CD14-positive monocyte (primary cell): ENCODE measurements at regions of chr1 and their contacts with region 1.

Region 1: DNA sequence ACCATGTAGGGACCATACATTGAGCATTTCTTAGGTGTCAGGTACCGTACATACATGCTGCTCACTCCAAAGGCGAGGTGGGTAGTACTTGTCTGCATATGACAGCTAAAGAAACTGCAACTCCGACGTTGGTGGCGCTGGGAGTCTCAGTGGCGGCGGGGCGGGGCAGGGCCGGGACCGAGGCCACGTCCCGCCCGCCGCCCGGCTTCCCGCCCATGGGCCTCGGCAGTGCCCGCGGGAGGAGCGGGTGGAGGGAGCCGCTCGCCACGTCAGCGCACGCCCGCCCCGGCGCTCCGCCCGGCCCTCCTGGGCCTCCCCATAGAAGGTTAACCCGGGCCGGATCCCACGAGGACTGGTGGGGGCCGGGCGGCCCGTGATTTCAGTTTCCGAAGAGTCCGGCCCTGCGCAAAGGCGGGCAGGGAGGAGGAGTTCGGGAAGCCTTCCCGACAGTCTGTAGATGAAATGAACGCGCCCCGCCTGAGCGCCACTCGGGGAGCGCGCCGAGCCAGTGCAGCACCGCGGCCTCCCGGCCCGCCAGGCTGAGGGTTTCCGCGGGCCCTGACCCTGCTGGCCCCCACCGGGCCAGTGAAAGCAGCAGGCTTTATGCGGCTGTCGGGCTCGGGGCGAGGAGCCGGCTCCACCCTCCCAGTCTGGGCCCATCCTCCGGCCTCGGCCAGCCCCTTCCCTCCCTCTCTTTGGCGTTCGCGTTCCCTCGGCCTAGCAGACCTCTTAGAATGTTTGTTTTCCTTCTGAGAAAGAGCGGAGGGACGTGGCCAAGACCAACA is 119.9 kb upstream of the JUN start:
- DNase-seq: peak; percentile 74 to 82 (median 76)
- H3K4me3 ChIP-seq: peak overlapping the region; percentile 33 to 76 (median 48)
- H3K4me3 Mint-ChIP-seq: peak overlapping the region; percentile 80 to 88
- H3K27ac ChIP-seq: peak overlapping the region; percentile 91 to 92
- H3K27ac Mint-ChIP-seq: peak overlapping the region; percentile 92 to 97 (median 97)
- H3K4me1 ChIP-seq: peaks cover 34 to 49% of the 10 kb centered on the region in 2 donors
- H3K4me1 Mint-ChIP-seq: peaks cover 46% of the 10 kb centered on the region
- H3K27me3 ChIP-seq: no peaks in the 10 kb centered on the region
- H3K27me3 Mint-ChIP-seq: peaks cover 0 to 6% (median 4%) of the 10 kb centered on the region in 3 donors
- CTCF ChIP-seq: no peak

Region 2: DNA sequence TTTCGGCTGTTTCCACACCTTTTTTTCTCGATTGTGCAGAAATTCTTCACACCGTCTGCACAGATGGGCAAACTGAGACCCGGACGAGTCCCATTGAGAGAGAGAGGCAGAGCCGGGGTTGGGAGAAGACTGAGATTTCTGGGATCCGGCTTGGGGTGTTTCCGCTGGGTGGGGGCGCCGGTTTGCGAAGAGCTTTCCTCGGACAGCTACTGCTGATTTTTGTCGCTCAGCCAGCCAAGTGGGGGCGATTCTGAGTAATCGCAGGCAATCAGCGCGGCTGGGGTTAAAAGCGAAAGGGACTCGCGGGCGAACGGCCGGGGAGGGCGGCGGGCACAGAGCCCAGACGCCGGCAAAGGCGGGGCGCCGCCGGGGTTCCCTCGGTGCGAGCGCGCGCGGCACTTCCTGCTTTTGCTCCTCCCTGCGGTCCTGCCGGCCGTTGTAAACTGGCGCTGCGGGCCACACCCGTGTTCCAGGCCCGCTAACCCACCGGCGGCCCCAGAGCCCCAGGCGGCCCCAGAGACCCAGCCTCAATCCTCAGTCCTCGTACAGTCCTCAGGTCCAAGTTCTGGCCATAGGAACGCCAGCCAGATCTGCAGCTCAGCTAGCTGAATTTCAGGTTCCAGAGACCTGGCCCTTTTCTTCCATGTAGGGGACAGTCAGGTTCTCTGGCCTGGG is 87.5 kb before region 1 on chr1:
- intact Hi-C with region 1: loop called in 1 of 2 experiments (anchors 10 kb)
- DNase-seq: peak; percentile 84 to 88 (median 85)
- H3K4me3 ChIP-seq: peak overlapping the region; percentile 73 to 93 (median 84)
- H3K4me3 Mint-ChIP-seq: peak overlapping the region; percentile 89 to 95
- H3K27ac ChIP-seq: peak overlapping the region; percentile 87 to 93
- H3K27ac Mint-ChIP-seq: peak overlapping the region; percentile 89 to 98 (median 96)
- H3K4me1 ChIP-seq: peaks cover 44 to 59% of the 10 kb centered on the region in 2 donors
- H3K4me1 Mint-ChIP-seq: peaks cover 63% of the 10 kb centered on the region
- H3K27me3 ChIP-seq: no peaks in the 10 kb centered on the region
- H3K27me3 Mint-ChIP-seq: no peaks in the 10 kb centered on the region
- CTCF ChIP-seq: no peak

Region 3: DNA sequence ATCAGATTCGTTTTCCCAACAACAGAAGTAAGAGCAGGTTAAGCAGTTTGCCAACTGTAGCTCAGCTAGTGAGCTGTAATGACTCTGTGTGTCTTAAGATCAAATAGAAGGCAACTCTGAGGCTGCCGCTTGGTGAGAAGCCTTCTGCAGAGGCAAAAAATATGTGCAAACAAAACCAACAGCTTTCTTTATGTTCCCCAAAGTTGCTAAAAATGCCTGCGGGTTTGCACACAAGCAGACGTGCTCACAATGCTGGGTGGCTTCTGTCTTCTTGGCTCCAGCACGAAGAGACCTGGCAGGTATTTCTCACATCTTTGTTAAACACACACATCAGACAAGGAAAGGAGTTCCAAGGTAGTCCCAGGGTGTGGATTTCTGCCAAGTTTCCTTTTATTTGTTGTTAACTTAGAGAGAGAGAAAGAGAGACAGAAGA is 39.1 kb after region 1 on chr1:
- intact Hi-C with region 1: no loop called
- DNase-seq: no peak
- H3K4me3 ChIP-seq: no peak overlapping the region
- H3K4me3 Mint-ChIP-seq: no peak overlapping the region
- H3K27ac ChIP-seq: no peak overlapping the region
- H3K27ac Mint-ChIP-seq: no peak overlapping the region
- H3K4me1 ChIP-seq: peaks cover 17 to 27% of the 10 kb centered on the region in 2 donors
- H3K4me1 Mint-ChIP-seq: peaks cover 47% of the 10 kb centered on the region
- H3K27me3 ChIP-seq: no peaks in the 10 kb centered on the region
- H3K27me3 Mint-ChIP-seq: peaks cover 3 to 13% (median 9%) of the 10 kb centered on the region in 3 donors
- CTCF ChIP-seq: no peak

Region 4: DNA sequence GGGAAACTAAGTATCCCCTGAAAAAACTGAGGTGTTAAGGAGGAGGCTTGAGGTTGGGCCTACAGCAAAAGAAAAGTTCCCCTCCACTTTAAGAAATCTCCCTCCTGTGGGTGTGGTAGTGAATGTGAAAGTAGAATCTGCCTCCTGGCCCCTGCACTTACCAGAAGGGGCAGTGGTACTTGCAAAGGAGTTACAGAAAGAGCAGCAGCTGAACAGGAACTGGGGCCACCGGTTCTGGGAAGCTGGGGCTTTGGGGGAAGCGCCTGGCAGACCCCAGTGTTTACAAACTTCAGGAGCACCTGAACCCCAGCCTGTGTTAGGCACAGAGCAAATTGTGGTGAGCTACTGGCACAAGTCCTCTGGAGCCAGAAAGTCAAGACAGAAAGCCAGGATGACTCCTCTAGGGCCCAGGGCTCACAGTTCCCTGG is 143.0 kb after region 1 on chr1:
- intact Hi-C with region 1: no loop called
- DNase-seq: peak in 1 of 3 donors; percentile 10
- H3K4me3 ChIP-seq: no peak overlapping the region
- H3K4me3 Mint-ChIP-seq: no peak overlapping the region
- H3K27ac ChIP-seq: peak overlapping the region in 1 of 2 donors; percentile 7
- H3K27ac Mint-ChIP-seq: peak overlapping the region in 3 of 7 donors; percentile 38 to 58 (median 50)
- H3K4me1 ChIP-seq: peaks cover 3 to 6% of the 10 kb centered on the region in 2 donors
- H3K4me1 Mint-ChIP-seq: peaks cover 18% of the 10 kb centered on the region
- H3K27me3 ChIP-seq: no peaks in the 10 kb centered on the region
- H3K27me3 Mint-ChIP-seq: peaks cover 0 to 3% (median 2%) of the 10 kb centered on the region in 3 donors
- CTCF ChIP-seq: no peak